ENCODE measurements at regions of chr5 and their contacts with region 1.

Region 1: DNA sequence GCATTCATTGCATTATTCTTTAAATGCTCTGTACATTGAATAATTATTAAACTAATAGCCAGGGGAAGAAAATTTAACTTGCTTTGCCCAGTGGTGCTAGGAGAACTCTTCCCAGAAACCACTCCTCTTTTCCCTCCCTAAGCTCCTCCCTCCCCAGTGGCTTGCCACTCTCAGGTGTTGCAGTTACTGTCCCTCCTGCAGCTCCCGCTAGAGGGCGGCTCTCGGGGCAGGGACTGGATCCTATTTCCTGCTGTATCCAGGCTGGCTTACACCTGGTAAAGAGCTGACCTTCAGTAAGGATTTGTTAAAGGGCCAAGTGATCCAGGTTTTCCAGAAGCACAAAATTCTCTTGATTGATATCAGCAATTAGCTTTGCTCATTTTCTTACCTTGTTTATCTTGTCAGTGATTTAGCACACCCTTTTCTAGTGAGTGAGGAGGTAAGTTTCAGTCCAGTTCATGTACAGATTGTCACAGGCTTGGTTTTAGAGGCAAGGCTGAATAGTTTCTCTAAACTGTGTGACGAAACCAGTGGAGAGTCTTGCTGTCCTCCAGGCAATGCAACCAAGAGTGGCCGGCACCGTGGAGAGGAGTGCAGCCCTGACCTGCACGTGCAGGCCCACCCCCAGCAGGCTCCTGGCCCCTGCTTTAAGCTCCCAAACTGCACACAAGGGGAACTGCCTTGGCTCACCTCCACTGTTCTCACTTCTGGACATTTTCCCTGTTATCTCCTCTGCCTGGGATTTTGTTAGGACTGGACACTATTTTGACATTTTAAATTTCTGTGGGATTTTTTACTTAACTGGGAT is 423.8 kb downstream of the SPOCK1 start:
- DNase-seq: peak; percentile 85
- H3K4me3 ChIP-seq: no peak overlapping the region
- H3K27ac ChIP-seq: peak overlapping the region; percentile 100
- H3K4me1 ChIP-seq: peaks cover 91% of the 10 kb centered on the region
- CTCF ChIP-seq: peak; percentile 97

Region 2: DNA sequence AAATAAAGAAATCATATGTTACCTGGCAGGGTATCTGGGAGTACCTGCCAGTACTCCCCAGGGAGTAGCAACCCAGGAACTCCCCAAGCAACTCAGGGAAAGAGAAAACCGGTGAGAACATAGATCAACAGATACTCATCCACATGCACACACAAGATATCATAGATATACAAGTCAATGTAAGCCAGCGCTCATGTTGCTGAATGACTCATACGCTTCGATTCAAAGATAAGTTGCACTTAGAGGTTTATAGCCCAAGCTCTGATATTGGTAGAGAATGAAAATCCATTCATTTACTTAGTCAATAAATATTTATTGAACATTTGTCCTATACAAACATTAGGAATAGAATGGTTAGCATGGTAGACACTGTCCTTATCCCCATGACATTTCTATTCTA is 490.9 kb before region 1 on chr5:
- CTCF ChIA-PET with region 1: no interaction called
- POLR2A ChIA-PET with region 1: no interaction called
- intact Hi-C with region 1: no loop called
- DNase-seq: no peak
- H3K4me3 ChIP-seq: no peak overlapping the region
- H3K27ac ChIP-seq: no peak overlapping the region
- H3K4me1 ChIP-seq: no peaks in the 10 kb centered on the region
- CTCF ChIP-seq: no peak

Region 3: DNA sequence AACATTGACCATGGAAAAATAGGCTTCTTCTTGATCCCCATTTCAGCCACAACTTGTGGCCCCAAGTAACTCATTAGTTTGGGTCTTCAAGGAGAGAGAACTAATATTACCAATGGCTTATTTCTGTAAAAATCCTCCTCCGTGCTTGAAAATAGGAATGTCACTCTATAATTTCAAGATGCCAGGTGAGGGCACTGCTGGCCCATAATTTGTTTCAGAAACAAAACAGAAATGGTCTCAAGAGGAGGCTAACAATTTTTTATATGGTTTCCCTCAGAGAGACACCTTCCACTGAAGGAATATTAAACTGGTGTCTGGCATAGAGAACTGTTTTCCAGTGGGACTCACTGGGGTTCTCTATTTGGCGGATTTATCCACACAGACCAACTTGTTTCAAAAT is 273.0 kb before region 1 on chr5:
- CTCF ChIA-PET with region 1: no interaction called
- POLR2A ChIA-PET with region 1: no interaction called
- intact Hi-C with region 1: loop called (anchors 10 kb)
- DNase-seq: peak; percentile 34
- H3K4me3 ChIP-seq: no peak overlapping the region
- H3K27ac ChIP-seq: no peak overlapping the region
- H3K4me1 ChIP-seq: no peaks in the 10 kb centered on the region
- CTCF ChIP-seq: peak; percentile 71

Region 4: GRCh38 chr5:137055271-137055872 is 20.0 kb before region 1 on chr5:
- CTCF ChIA-PET with region 1: interaction called, 9 read pairs
- POLR2A ChIA-PET with region 1: interaction called, 126 read pairs
- intact Hi-C with region 1: no loop called
- DNase-seq: no peak
- H3K4me3 ChIP-seq: no peak overlapping the region
- H3K27ac ChIP-seq: no peak overlapping the region
- H3K4me1 ChIP-seq: peaks cover 33% of the 10 kb centered on the region
- CTCF ChIP-seq: no peak

Region 5: DNA sequence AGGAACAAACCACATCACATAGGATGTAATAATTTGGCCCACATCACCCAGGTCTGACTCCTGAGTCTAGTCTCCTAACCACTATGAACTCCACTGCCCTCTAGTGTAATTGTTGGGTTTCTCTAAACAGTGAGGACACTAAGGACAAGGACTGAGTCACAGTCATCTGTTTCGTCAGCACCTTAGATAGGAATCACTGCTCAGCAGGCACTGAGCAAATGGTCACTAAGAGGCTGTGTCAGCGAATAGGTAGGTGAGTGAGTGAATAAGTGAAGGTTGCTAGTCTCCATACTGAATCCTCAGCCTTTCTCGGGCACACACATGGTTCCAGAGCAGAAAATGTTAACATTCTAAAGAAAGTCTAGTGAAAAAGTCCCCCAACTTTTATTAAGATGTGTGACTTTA is 145.2 kb after region 1 on chr5:
- CTCF ChIA-PET with region 1: no interaction called
- POLR2A ChIA-PET with region 1: interaction called, 3 read pairs
- intact Hi-C with region 1: loop called (anchors 1 kb)
- DNase-seq: peak; percentile 75
- H3K4me3 ChIP-seq: no peak overlapping the region
- H3K27ac ChIP-seq: no peak overlapping the region
- H3K4me1 ChIP-seq: no peaks in the 10 kb centered on the region
- CTCF ChIP-seq: peak; percentile 85

Region 6: GRCh38 chr5:137754126-137754960 is 679.0 kb after region 1 on chr5 and contains the start of gene HNRNPA0:
- CTCF ChIA-PET with region 1: no interaction called
- POLR2A ChIA-PET with region 1: no interaction called
- intact Hi-C with region 1: loop called (anchors 5 kb)
- DNase-seq: peak; percentile 98
- H3K4me3 ChIP-seq: peak within 1 kb of the TSS; percentile 99
- H3K27ac ChIP-seq: peak within 1 kb of the TSS; percentile 72
- H3K4me1 ChIP-seq: peaks cover 23% of the 10 kb centered on the region
- CTCF ChIP-seq: no peak
- total RNA-seq, gene HNRNPA0: 20.6 and 25.8 TPM in 2 replicates